ENCODE measurements at regions of chrX and their contacts with region 1.

Region 1: DNA sequence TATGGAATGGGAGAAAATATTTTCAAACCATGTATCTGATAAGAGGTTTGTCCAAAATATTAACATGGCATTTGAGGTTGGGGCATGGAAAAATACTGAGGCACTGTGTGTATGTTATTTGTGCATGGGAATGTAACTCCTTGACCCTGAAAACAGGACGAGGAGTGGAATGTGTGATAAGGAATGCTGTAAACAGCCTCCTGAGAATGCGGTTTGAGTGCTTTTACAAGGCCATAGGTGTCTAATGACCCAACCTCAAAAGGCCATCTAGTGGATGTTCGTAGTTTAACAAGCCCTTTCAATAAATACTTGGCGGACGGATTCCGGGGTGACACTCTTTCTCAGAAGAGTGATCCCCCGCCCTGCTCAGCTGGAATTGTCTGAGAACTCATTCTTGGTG is 162.9 kb upstream of the USP9X start:
- DNase-seq: peak; percentile 55
- H3K4me3 ChIP-seq: no peak overlapping the region
- H3K27ac ChIP-seq: no peak overlapping the region
- H3K4me1 ChIP-seq: no peaks in the 10 kb centered on the region
- H3K27me3 ChIP-seq: no peaks in the 10 kb centered on the region
- CTCF ChIP-seq: peak; percentile 39 to 56

Region 2: DNA sequence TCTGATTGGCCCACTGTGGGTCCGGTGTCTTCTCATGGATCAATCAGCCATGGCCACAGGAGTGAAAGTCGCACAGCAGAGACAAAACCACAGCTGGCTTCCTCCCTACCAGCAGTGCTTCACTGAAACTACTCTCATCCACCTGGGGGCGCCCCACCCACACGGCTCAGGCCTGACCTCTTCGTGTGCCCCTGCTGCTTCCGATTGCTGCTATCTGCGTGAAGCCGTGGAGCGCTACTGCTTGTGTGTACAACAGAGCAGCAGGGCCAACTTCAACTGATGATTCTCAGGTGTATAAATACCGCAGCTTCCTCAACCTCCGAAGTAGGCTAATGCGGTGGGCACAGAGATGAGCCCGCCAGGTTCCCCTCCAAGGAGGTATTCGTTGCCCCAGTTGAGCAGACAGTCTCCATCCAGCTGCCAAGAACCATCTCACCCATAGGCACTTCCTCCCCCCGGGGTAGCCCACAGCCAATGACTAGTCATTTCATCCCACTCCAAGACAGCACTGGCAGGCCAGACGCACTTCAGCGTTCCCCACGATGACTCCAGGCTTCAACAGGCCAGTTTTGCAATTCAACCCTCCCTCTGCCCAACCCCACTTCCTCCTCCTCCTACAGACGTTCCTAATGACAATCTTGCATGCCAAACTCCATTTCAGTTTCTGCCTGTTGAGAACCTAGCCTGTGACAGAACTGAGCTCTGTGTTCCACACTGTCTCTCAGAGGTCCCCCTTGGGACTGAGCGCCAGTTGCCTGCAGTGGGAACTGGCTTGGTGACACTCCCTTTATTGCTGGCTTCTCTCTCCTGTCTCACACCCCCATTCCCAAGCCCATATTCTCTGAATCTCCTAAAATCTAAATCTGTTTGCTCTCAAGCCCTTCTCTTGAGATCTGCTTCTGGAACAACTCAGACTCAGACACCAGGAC is 382.8 kb before region 1 on chrX:
- CTCF ChIA-PET with region 1: no interaction called
- dilution Hi-C with region 1: no loop called
- in situ Hi-C with region 1: no loop called
- intact Hi-C with region 1: loop called (anchors 2 kb)
- DNase-seq: peak; percentile 32
- H3K4me3 ChIP-seq: no peak overlapping the region
- H3K27ac ChIP-seq: no peak overlapping the region
- H3K4me1 ChIP-seq: no peaks in the 10 kb centered on the region
- H3K27me3 ChIP-seq: peaks cover 8% of the 10 kb centered on the region
- CTCF ChIP-seq: peak in 1 of 2 donors; percentile 13

Region 3: DNA sequence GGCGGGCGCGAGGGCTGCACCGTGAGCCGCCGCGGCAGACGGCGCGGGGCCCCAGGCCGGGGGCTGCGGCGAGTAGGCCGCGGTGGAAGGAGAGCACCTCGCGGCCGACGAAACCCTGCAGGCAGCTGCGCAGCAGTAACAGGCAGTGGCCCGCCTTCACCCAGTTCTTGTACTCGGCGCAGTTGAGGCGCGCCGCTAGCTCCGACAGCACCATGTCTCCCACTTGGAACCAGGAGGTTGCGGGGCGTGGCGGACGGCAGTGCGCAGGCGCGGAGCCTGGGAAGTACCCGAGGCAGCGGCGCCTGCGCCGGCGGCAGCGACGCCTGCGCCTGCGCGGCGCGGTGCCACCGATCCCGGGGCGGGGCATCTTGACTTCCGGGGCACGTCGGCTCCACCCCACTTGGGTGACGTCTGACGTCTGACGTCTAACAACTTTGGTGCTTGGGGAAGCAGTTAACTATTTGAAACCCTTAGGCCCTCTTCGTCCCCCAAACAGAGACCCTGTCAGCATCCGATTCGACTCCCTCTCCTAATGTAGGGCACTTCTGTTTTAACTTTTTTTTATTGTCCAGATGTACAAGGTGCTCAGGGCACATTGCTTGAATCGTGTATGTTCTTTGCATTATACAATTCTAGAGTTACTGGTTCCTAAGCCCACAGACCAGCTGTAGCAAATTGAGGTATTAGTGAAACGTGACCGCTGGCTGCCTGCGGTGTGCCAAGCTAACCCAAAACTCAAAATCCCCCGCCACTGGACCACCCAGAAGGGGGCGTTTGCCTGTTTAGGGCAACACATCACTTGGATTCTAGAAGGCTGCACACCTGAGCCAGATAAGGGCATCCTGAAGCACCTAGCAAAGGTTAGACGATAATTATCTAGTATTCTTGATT is 274.8 kb before region 1 on chrX and contains the start of gene CXorf38:
- CTCF ChIA-PET with region 1: interaction called, 4 read pairs
- dilution Hi-C with region 1: no loop called
- in situ Hi-C with region 1: no loop called
- intact Hi-C with region 1: loop called (anchors 1 kb)
- DNase-seq: peak; percentile 88
- H3K4me3 ChIP-seq: peak within 1 kb of the TSS; percentile 52 to 89 (median 77)
- H3K27ac ChIP-seq: peak within 1 kb of the TSS; percentile 62
- H3K4me1 ChIP-seq: peaks cover 17% of the 10 kb centered on the region
- H3K27me3 ChIP-seq: no peaks in the 10 kb centered on the region
- CTCF ChIP-seq: no peak
- total RNA-seq, gene CXorf38: 18.0 to 19.8 TPM

Region 4: GRCh38 chrX:40735325-40736169 is 186.8 kb before region 1 on chrX and contains the start of gene MED14:
- CTCF ChIA-PET with region 1: no interaction called
- dilution Hi-C with region 1: no loop called
- in situ Hi-C with region 1: no loop called
- intact Hi-C with region 1: loop called (anchors 5 kb)
- DNase-seq: peak; percentile 93
- H3K4me3 ChIP-seq: peak within 1 kb of the TSS; percentile 51 to 88 (median 58)
- H3K27ac ChIP-seq: peak within 1 kb of the TSS; percentile 87
- H3K4me1 ChIP-seq: peaks cover 3% of the 10 kb centered on the region
- H3K27me3 ChIP-seq: no peaks in the 10 kb centered on the region
- CTCF ChIP-seq: peak; percentile 28 to 75
- total RNA-seq, gene MED14: 25.7 to 58.7 TPM

Region 5: DNA sequence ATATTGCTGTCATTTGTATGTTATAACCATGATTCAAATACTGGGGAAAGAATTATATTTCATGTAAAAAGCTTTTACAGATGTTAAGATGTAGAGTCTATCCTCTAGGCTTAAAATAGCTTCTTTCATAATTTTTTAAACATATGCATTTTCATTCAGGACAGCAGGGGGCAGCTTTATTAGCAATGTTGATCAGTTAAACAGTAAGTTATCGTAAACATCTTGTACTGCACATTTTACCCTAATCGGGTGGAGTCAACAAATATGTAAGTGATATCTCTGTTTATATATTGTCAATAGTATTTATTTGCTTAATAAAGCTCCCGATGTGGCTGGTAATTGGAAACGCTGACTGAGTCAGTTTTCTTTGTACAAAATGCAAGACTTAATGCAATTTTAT is 44.4 kb before region 1 on chrX:
- CTCF ChIA-PET with region 1: interaction called, 3 read pairs
- dilution Hi-C with region 1: no loop called
- in situ Hi-C with region 1: no loop called
- intact Hi-C with region 1: loop called (anchors 1 kb)
- DNase-seq: peak; percentile 9
- H3K4me3 ChIP-seq: no peak overlapping the region
- H3K27ac ChIP-seq: no peak overlapping the region
- H3K4me1 ChIP-seq: no peaks in the 10 kb centered on the region
- H3K27me3 ChIP-seq: peaks cover 3% of the 10 kb centered on the region
- CTCF ChIP-seq: peak; percentile 28 to 59